ENCODE measurements at regions of chr14 and their contacts with region 1.

Region 1: DNA sequence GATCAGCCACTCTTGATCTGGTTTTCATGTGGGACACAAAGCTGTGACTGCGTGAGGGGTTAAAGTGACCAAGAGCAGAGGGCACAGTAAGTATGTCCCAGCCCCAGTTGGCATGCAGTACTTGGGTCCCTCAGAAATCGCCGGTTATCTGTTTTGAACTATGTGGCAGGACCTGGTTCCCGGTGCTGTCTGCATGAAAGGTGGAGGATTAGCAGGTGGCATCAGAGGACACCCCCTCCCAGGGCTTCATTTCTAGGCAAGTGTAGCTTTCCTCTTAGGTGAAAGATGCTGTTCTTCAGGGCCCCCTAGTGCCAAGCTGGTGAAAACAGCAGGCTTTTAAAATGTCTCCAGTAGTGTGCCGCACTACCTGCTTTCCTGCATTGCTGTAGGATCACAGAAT is 57.1 kb downstream of the ATG14 start:
- DNase-seq: peak; percentile 48 to 89 (median 58)
- ATAC-seq: peak; percentile 90
- H3K4me3 ChIP-seq: peak overlapping the region; percentile 32
- H3K4me3 Mint-ChIP-seq: peak overlapping the region; percentile 57
- H3K27ac ChIP-seq: peak overlapping the region; percentile 43 to 67
- H3K27ac Mint-ChIP-seq: peak overlapping the region; percentile 91
- H3K4me1 ChIP-seq: peaks cover 17% of the 10 kb centered on the region
- H3K4me1 Mint-ChIP-seq: peaks cover 17% of the 10 kb centered on the region
- H3K27me3 ChIP-seq: no peaks in the 10 kb centered on the region
- H3K27me3 Mint-ChIP-seq: no peaks in the 10 kb centered on the region
- CTCF ChIP-seq: peak; percentile 73

Region 2: DNA sequence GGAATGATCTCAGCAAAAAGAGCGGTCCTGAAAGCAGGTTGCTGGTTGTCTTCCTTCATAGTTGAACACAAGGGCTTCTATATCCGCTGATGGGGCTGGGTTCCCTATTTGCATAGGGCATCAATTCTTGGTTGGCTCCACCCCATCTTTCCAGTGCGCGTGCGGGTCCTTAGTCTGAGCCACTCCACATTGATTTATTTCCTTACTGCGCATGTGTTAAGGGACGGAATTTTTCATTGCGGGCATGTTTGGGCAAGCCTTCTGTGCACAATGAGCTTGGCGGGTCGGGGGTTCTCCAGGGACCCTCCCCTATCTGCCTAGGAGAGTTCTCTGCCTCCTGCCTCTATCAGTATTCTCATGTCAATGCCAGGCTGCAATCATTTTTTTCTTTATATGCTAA is 141.9 kb before region 1 on chr14:
- CTCF ChIA-PET with region 1: interaction called, 4 read pairs
- POLR2A ChIA-PET with region 1: no interaction called
- intact Hi-C with region 1: loop called (anchors 1 to 5 kb)
- DNase-seq: no peak
- ATAC-seq: no peak
- H3K4me3 ChIP-seq: no peak overlapping the region
- H3K4me3 Mint-ChIP-seq: no peak overlapping the region
- H3K27ac ChIP-seq: no peak overlapping the region
- H3K27ac Mint-ChIP-seq: no peak overlapping the region
- H3K4me1 ChIP-seq: no peaks in the 10 kb centered on the region
- H3K4me1 Mint-ChIP-seq: peaks cover 5% of the 10 kb centered on the region
- H3K27me3 ChIP-seq: no peaks in the 10 kb centered on the region
- H3K27me3 Mint-ChIP-seq: no peaks in the 10 kb centered on the region
- CTCF ChIP-seq: no peak

Region 3: GRCh38 chr14:55245657-55246268 is 108.7 kb before region 1 on chr14:
- CTCF ChIA-PET with region 1: interaction called, 16 read pairs
- POLR2A ChIA-PET with region 1: interaction called, 3 read pairs
- intact Hi-C with region 1: loop called (anchors 1 kb)
- DNase-seq: peak in 8 of 14 experiments; percentile 8 to 70 (median 32)
- ATAC-seq: peak; percentile 76
- H3K4me3 ChIP-seq: no peak overlapping the region
- H3K4me3 Mint-ChIP-seq: no peak overlapping the region
- H3K27ac ChIP-seq: no peak overlapping the region
- H3K27ac Mint-ChIP-seq: no peak overlapping the region
- H3K4me1 ChIP-seq: no peaks in the 10 kb centered on the region
- H3K4me1 Mint-ChIP-seq: no peaks in the 10 kb centered on the region
- H3K27me3 ChIP-seq: peaks cover 0 to 5% of the 10 kb centered on the region in 2 experiments
- H3K27me3 Mint-ChIP-seq: peaks cover 38% of the 10 kb centered on the region
- CTCF ChIP-seq: peak; percentile 68

Region 4: GRCh38 chr14:55270832-55271565 is 83.5 kb before region 1 on chr14 and contains the start of gene FBXO34:
- CTCF ChIA-PET with region 1: interaction called, 49 read pairs
- POLR2A ChIA-PET with region 1: interaction called, 42 read pairs
- intact Hi-C with region 1: loop called (anchors 1 kb)
- DNase-seq: peak; percentile 96 to 100 (median 100)
- ATAC-seq: peak; percentile 91
- H3K4me3 ChIP-seq: peak within 1 kb of the TSS; percentile 98
- H3K4me3 Mint-ChIP-seq: peak within 1 kb of the TSS; percentile 97
- H3K27ac ChIP-seq: peak within 1 kb of the TSS; percentile 55 to 61
- H3K27ac Mint-ChIP-seq: peak within 1 kb of the TSS; percentile 94
- H3K4me1 ChIP-seq: peaks cover 9% of the 10 kb centered on the region
- H3K4me1 Mint-ChIP-seq: peaks cover 47% of the 10 kb centered on the region
- H3K27me3 ChIP-seq: no peaks in the 10 kb centered on the region
- H3K27me3 Mint-ChIP-seq: no peaks in the 10 kb centered on the region
- CTCF ChIP-seq: peak; percentile 97
- total RNA-seq, gene FBXO34: 28.3 to 29.7 TPM

Region 5: DNA sequence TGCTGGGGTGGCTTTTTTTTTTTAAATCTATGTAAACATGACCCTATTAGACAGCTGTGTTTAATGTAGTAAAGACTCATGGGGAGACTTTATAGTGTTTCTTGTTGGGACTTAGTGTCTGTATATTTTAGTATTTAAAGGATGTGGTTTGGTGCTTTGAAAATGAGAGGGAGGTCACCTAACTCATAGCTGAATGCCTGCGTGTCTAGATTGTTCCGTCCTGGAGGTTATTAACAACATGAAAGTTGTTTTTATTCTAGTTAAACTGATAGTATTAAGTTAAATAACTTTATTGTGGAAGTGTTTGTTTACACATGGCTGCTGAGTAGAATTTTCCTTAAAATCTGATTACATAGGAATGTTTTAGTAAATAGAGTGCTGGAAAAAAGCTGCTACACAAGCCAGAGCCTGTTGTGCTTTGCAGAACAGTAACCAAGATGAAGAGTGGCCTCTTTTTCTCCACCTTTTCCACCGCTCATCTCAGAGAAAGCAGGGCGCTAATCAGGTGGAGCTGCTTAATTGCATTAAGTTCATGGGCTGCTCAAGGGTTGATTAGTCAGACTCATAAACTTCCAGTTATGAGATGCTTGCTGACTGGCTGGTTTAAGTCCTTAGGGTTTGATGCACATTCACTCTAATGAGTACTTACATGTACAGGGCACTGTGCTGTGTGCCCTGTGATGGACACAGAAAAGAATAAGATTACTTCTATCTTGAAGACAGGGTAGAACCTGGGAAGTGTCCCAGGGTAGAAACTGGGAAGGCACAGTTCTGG is 20.6 kb before region 1 on chr14:
- CTCF ChIA-PET with region 1: interaction called, 22 read pairs
- POLR2A ChIA-PET with region 1: interaction called, 47 read pairs
- intact Hi-C with region 1: loop called in 1 of 2 experiments (anchors 2 kb)
- DNase-seq: peak in 4 of 14 experiments; percentile 20 to 81 (median 42)
- ATAC-seq: peak; percentile 16
- H3K4me3 ChIP-seq: peak overlapping the region; percentile 50
- H3K4me3 Mint-ChIP-seq: peak overlapping the region; percentile 85
- H3K27ac ChIP-seq: peak overlapping the region; percentile 46 to 53
- H3K27ac Mint-ChIP-seq: peak overlapping the region; percentile 79
- H3K4me1 ChIP-seq: peaks cover 44% of the 10 kb centered on the region
- H3K4me1 Mint-ChIP-seq: peaks cover 84% of the 10 kb centered on the region
- H3K27me3 ChIP-seq: no peaks in the 10 kb centered on the region
- H3K27me3 Mint-ChIP-seq: no peaks in the 10 kb centered on the region
- CTCF ChIP-seq: no peak

Region 6: GRCh38 chr14:55373784-55374705 is 19.5 kb after region 1 on chr14:
- CTCF ChIA-PET with region 1: interaction called, 19 read pairs
- POLR2A ChIA-PET with region 1: no interaction called
- intact Hi-C with region 1: no loop called
- DNase-seq: peak in 5 of 14 experiments; percentile 20 to 87 (median 75)
- ATAC-seq: peak; percentile 90
- H3K4me3 ChIP-seq: no peak overlapping the region
- H3K4me3 Mint-ChIP-seq: peak overlapping the region; percentile 32
- H3K27ac ChIP-seq: peak overlapping the region; percentile 55 to 68
- H3K27ac Mint-ChIP-seq: peak overlapping the region; percentile 80
- H3K4me1 ChIP-seq: peaks cover 27% of the 10 kb centered on the region
- H3K4me1 Mint-ChIP-seq: peaks cover 33% of the 10 kb centered on the region
- H3K27me3 ChIP-seq: no peaks in the 10 kb centered on the region
- H3K27me3 Mint-ChIP-seq: no peaks in the 10 kb centered on the region
- CTCF ChIP-seq: no peak

Measured in CD4-positive, alpha-beta T cell (primary cell).